Heart left ventricle (tissue), 16 donors: ENCODE measurements at regions of chr14 and their contacts with region 1.

Region 1: GRCh38 chr14:93115069-93115820 is 480 bp downstream of the ITPK1 start:
- DNase-seq: peak; percentile 91 to 94 (median 92)
- ATAC-seq: peak; percentile 79 to 95 (median 90)
- H3K4me3 ChIP-seq: peak overlapping the region; percentile 73 to 96 (median 88)
- H3K27ac ChIP-seq: peak overlapping the region; percentile 95 to 99 (median 98)
- H3K4me1 ChIP-seq: peaks cover 0 to 52% (median 32%) of the 10 kb centered on the region in 12 donors
- H3K27me3 ChIP-seq: no peaks in the 10 kb centered on the region
- CTCF ChIP-seq: peak in 3 of 12 donors; percentile 1 to 32 (median 18)
- POLR2A ChIP-seq: peak in 1 of 2 donors; percentile 74

Region 2: DNA sequence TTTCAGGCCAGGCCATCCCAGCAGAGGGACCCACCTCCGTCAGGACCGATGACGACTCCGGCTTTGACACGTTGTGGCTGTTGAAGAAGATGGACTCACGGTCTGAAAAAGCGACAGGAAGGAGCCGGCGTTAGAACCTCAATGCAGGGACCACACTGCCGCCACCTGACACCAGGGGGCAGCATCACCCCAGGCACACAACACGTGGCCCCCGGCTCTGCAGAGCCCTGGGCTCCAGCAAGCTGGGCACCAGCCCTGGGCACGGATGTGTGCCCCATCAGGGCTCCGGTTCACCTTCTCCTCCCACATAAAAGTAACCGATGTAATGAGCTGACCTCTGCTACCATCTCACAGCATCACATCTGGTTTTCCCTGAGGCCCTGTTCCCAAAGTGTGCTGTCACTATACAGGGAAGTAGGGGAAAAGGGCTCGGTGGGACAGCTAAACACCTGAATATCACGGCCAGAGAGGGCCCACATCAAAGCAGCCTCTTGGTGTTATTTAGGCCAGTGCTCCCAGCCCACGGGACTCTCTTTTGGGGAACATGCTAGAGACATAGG is 163.3 kb before region 1 on chr14:
- intact Hi-C with region 1: loop called in 4 of 10 experiments (anchors 1 to 5 kb)
- DNase-seq: peak; percentile 74 to 87 (median 79)
- ATAC-seq: peak; percentile 54 to 79 (median 76)
- H3K4me3 ChIP-seq: no peak overlapping the region
- H3K27ac ChIP-seq: peak overlapping the region; percentile 15 to 84 (median 68)
- H3K4me1 ChIP-seq: peaks cover 0 to 67% (median 19%) of the 10 kb centered on the region in 12 donors
- H3K27me3 ChIP-seq: no peaks in the 10 kb centered on the region
- CTCF ChIP-seq: peak; percentile 92 to 98 (median 96)
- POLR2A ChIP-seq: no peak

Region 3: DNA sequence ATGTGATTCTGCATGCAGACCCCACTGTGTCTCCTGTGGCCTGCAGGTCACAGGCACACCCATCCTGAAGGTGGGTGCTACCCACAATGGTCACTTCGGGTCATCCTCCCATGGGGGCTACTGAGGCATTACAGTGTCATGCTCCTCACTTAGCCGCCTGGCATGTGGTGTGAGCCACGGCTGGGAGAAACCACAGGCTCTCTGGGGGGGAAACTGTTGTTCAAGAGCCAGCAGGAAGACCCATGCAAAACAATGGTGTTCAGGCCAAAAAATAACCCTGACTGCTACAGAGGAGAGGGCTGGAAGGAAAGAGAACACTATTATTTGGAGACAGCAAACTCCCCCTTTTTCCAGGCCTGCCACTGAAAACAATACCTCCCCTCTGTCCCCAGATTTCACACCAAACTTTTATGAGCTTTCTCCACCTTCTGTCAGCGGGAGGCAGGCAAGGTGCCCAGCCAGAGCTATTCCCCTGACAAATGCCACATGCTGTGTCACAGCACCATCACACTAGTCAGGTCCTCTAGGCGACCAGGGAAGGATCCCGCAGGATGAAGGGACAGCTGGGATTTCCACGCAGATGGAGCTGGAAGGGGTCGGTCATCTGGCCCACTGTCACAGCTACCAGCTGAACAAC is 108.6 kb before region 1 on chr14:
- intact Hi-C with region 1: no loop called
- DNase-seq: no peak
- ATAC-seq: no peak
- H3K4me3 ChIP-seq: no peak overlapping the region
- H3K27ac ChIP-seq: peak overlapping the region in 11 of 12 donors; percentile 24 to 89 (median 77)
- H3K4me1 ChIP-seq: peaks cover 7 to 87% (median 64%) of the 10 kb centered on the region in 12 donors
- H3K27me3 ChIP-seq: no peaks in the 10 kb centered on the region
- CTCF ChIP-seq: no peak
- POLR2A ChIP-seq: no peak

Region 4: GRCh38 chr14:93033983-93034670 is 81.1 kb before region 1 on chr14:
- intact Hi-C with region 1: loop called in 1 of 10 experiments (anchors 10 kb)
- DNase-seq: no peak
- ATAC-seq: peak in 3 of 4 donors; percentile 10 to 54 (median 36)
- H3K4me3 ChIP-seq: no peak overlapping the region
- H3K27ac ChIP-seq: peak overlapping the region in 5 of 12 donors; percentile 2 to 90 (median 29)
- H3K4me1 ChIP-seq: peaks cover 13 to 75% (median 50%) of the 10 kb centered on the region in 12 donors
- H3K27me3 ChIP-seq: no peaks in the 10 kb centered on the region
- CTCF ChIP-seq: peak in 10 of 12 donors; percentile 35 to 63 (median 50)
- POLR2A ChIP-seq: no peak

Region 5: DNA sequence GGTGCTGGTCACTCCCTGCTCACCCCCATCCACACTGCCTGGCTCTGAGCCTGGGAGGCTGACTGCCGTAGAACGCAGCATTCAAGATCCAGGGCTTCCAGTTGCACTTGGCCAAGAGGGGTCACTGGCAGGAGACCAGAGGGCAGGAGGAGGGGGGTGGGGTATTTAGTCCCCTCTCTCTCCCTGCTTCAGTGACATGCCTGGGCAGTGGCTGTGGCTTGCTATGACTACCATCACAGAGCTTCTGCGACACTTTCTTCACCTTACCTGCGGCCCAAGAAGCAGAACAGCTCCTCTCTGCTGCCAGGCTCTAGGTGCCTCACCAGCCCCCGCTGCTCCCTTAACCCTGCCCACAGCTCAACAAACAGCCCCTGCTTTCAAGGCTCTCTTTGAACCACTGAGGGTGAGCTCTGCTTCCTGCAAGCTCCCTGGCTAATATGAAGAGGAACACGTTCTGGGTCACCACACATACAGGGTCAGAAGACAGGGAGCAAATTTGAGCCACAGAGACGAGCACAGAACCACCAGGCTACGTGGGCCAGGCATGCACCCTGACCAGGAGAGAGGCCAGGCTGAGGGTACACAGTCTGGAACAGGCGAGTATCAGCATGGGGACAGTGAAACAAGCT is 55.2 kb before region 1 on chr14:
- intact Hi-C with region 1: loop called in 2 of 10 experiments (anchors 5 to 10 kb)
- DNase-seq: no peak
- ATAC-seq: peak in 1 of 4 donors; percentile 2
- H3K4me3 ChIP-seq: no peak overlapping the region
- H3K27ac ChIP-seq: peak overlapping the region in 6 of 12 donors; percentile 29 to 81 (median 41)
- H3K4me1 ChIP-seq: peaks cover 0 to 80% (median 53%) of the 10 kb centered on the region in 12 donors
- H3K27me3 ChIP-seq: no peaks in the 10 kb centered on the region
- CTCF ChIP-seq: no peak
- POLR2A ChIP-seq: no peak

Region 6: GRCh38 chr14:93137864-93138263 is 22.6 kb after region 1 on chr14:
- intact Hi-C with region 1: loop called in 1 of 10 experiments (anchors 2 kb)
- DNase-seq: peak; percentile 32 to 77 (median 69)
- ATAC-seq: peak in 3 of 4 donors; percentile 69 to 82 (median 79)
- H3K4me3 ChIP-seq: no peak overlapping the region
- H3K27ac ChIP-seq: no peak overlapping the region
- H3K4me1 ChIP-seq: peaks cover 0 to 11% (median 0%) of the 10 kb centered on the region in 12 donors
- H3K27me3 ChIP-seq: no peaks in the 10 kb centered on the region
- CTCF ChIP-seq: peak in 4 of 12 donors; percentile 14 to 41 (median 36)
- POLR2A ChIP-seq: no peak